ENCODE measurements at regions of chr12 and their contacts with region 1.

Region 1: DNA sequence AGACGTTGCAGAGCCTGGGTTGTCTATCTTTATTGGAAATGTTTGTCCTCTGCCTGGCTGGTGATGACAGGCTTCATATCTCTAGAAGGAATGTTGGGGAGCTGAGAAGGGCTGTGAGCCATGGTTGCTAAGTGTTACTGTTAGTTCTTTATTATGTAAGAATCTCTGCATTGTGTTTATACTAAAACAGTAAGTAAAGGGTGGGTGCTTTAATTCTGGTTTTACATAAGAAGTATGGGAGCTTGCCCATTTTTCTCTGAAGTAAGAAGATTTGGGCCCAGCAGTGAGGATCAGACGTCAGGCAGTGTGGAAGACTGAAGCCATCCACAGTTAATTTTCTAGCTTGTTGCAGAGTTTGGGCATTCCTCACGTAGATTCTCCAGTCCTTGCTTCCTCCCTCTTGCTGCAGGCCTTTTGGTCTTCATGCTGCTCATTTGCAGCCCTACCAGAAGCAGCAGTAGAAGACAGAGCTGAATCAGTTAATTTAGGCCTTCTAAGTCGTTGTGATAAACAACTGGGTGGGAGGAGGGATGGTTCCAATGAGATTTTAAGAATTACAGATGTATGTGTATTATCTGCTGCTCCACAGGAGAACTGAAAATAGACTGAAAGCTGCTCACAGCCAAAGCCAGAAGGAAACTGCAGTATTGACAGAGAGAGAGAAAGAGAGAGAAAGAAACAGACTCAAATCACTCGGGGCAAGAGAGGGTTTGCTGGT is 21.4 kb downstream of the WNT5B start:
- DNase-seq: no peak
- H3K4me3 ChIP-seq: no peak overlapping the region
- H3K27ac ChIP-seq: no peak overlapping the region
- H3K4me1 ChIP-seq: peaks cover 0 to 11% of the 10 kb centered on the region in 2 experiments; a peak in 1 of 4 replicates
- H3K27me3 ChIP-seq: no peaks in the 10 kb centered on the region
- CTCF ChIP-seq: no peak
- EP300 ChIP-seq: no peak
- RAD21 ChIP-seq: no peak

Region 2: GRCh38 chr12:1620092-1620491 is 30.3 kb before region 1 on chr12:
- CTCF ChIA-PET with region 1: no interaction called
- POLR2A ChIA-PET with region 1: no interaction called
- DNase-seq: no peak
- H3K4me3 ChIP-seq: no peak overlapping the region
- H3K27ac ChIP-seq: no peak overlapping the region
- H3K4me1 ChIP-seq: peaks cover 0 to 9% of the 10 kb centered on the region in 2 experiments; a peak in 1 of 4 replicates
- H3K27me3 ChIP-seq: no peaks in the 10 kb centered on the region
- CTCF ChIP-seq: no peak
- EP300 ChIP-seq: no peak
- RAD21 ChIP-seq: no peak

Region 3: GRCh38 chr12:1668833-1669543 is 18.6 kb after region 1 on chr12:
- CTCF ChIA-PET with region 1: interaction called, 10 read pairs
- POLR2A ChIA-PET with region 1: no interaction called
- DNase-seq: no peak
- H3K4me3 ChIP-seq: no peak overlapping the region
- H3K27ac ChIP-seq: no peak overlapping the region
- H3K4me1 ChIP-seq: no peaks in the 10 kb centered on the region
- H3K27me3 ChIP-seq: no peaks in the 10 kb centered on the region
- CTCF ChIP-seq: no peak
- EP300 ChIP-seq: no peak
- RAD21 ChIP-seq: no peak

Region 4: DNA sequence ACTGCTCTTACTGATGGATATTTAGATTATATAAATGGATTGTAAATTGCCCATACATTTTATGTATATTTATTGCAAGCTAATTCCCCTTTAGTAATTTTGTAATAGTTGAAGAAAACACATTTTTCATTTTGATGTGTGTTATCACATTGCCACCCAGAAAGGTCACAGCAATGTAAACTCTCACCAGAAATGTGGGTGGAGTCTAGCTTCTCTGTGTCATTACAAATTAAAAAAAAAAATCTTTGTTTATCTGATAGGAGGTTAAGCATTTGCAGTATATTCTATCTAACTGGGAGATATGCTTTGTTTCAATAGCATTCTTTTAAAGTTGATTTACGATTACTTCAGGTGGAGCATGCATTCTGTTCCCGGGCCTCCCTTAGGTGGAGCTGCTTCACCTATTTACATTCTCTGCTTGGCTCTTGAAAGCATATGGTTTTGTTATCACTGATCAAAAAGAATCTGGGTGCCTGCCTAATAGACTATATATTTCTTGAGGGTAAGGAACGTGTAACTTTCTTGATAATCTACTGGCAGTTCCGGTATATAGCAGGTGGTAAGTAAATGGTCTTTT is 48.3 kb after region 1 on chr12:
- CTCF ChIA-PET with region 1: interaction called, 11 read pairs
- POLR2A ChIA-PET with region 1: no interaction called
- DNase-seq: no peak
- H3K4me3 ChIP-seq: no peak overlapping the region
- H3K27ac ChIP-seq: no peak overlapping the region
- H3K4me1 ChIP-seq: no peaks in the 10 kb centered on the region; a peak in 1 of 4 replicates
- H3K27me3 ChIP-seq: no peaks in the 10 kb centered on the region
- CTCF ChIP-seq: no peak
- EP300 ChIP-seq: no peak
- RAD21 ChIP-seq: peak; percentile 47

Region 5: DNA sequence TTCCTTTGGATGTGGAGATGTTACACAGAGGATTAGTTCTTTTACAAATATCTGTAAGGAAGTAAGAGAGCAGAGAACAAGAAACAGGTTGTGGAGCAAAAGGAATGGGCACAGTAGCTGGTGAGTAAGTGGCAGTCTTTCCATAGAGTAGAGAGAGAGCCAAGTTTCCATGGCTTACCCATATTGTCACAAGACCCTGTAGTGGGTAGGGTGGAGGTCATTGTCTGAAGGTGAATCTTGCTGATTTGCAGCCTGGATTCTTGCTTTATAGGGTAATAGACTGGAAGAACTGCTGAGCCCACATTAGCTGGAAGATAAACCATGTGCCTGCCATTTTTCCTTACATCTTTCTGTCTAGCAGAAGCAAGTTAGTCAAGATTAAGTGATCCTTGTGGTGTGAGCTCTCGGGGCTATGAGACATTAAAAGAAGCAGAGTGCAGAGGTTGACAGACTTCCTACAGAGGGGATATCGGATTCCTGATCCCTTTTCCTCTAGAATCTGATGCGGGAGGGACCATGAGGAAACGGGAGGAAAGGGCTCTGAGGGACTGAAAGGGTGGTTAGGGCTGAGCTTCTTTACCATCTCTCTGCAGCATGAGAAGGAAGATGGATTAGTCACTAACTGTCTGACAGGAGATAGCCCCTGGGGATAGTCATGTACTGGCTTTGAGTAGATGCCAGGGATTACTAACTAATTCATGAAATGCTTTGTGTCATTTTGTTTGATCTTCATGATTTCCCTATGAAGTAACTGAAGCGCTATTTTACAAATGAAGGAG is 125.9 kb after region 1 on chr12:
- CTCF ChIA-PET with region 1: interaction called, 26 read pairs
- POLR2A ChIA-PET with region 1: no interaction called
- DNase-seq: peak; percentile 44
- H3K4me3 ChIP-seq: 0 out of 4 replicates have a peak overlapping the region, but pooled peaks of 1 of the 2 experiments have one; percentile 21
- H3K27ac ChIP-seq: peak overlapping the region; percentile 34 to 76; a peak in 3 of 4 replicates
- H3K4me1 ChIP-seq: peaks cover 16 to 56% of the 10 kb centered on the region in 2 experiments
- H3K27me3 ChIP-seq: no peaks in the 10 kb centered on the region
- CTCF ChIP-seq: no peak
- EP300 ChIP-seq: peak in 1 of 2 experiments; percentile 48; a peak in 1 of 4 replicates
- RAD21 ChIP-seq: no peak

Measured in SK-N-SH (cell line).